ENCODE measurements at regions of chr3 and their contacts with region 1.

Region 1: DNA sequence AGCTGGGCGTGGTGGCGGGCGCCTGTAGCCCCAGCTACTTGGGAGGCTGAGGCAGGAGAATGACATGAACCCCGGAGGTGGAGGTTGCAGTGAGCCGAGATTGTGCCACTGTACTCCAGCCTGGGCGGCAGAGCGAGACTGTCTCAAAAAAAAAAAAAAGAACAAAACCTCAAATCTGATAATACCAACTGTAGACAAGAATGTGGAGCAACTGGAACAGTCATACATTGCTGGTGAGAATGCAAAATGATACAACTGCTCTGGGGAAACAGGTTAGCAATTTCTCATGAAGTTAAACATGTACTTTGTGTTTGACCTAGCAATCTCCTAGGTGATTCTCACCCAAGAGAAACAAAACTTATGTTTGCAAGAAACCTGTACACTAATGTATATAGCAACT is 4.4 kb upstream of the VHL start:
- DNase-seq: no peak
- ATAC-seq: no peak
- H3K4me3 ChIP-seq: no peak overlapping the region
- H3K4me3 Mint-ChIP-seq: no peak overlapping the region
- H3K27ac ChIP-seq: no peak overlapping the region
- H3K27ac Mint-ChIP-seq: no peak overlapping the region
- H3K4me1 ChIP-seq: peaks cover 0 to 6% of the 10 kb centered on the region in 2 donors
- H3K4me1 Mint-ChIP-seq: peaks cover 4% of the 10 kb centered on the region
- H3K27me3 ChIP-seq: no peaks in the 10 kb centered on the region
- H3K27me3 Mint-ChIP-seq: no peaks in the 10 kb centered on the region
- CTCF ChIP-seq: no peak

Region 2: DNA sequence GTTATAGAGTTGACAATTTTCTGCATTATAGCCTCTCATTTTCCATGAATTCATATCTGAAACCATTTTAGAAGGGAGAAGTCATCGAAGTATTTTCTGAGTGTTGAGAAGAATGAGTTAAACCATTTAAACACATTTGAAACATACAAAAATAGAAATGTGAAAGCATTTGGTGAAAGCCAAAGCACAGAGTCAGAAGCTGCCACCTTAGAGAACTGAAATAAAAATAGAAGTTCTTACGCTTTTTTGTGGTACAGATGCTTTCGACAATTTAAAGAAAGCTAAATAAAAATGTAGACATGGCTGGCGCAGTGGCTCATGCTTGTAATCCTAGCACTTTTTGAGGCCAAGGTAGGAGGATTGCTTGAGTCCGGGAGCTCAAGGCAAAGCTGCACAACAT is 38.1 kb before region 1 on chr3:
- CTCF ChIA-PET with region 1: no interaction called
- POLR2A ChIA-PET with region 1: no interaction called
- intact Hi-C with region 1: loop called (anchors 5 kb)
- DNase-seq: no peak
- ATAC-seq: no peak
- H3K4me3 ChIP-seq: no peak overlapping the region
- H3K4me3 Mint-ChIP-seq: no peak overlapping the region
- H3K27ac ChIP-seq: no peak overlapping the region
- H3K27ac Mint-ChIP-seq: no peak overlapping the region
- H3K4me1 ChIP-seq: peaks cover 0 to 12% of the 10 kb centered on the region in 2 donors
- H3K4me1 Mint-ChIP-seq: no peaks in the 10 kb centered on the region
- H3K27me3 ChIP-seq: no peaks in the 10 kb centered on the region
- H3K27me3 Mint-ChIP-seq: no peaks in the 10 kb centered on the region
- CTCF ChIP-seq: no peak